ENCODE measurements at regions of chr9 and their contacts with region 1.

Region 1: DNA sequence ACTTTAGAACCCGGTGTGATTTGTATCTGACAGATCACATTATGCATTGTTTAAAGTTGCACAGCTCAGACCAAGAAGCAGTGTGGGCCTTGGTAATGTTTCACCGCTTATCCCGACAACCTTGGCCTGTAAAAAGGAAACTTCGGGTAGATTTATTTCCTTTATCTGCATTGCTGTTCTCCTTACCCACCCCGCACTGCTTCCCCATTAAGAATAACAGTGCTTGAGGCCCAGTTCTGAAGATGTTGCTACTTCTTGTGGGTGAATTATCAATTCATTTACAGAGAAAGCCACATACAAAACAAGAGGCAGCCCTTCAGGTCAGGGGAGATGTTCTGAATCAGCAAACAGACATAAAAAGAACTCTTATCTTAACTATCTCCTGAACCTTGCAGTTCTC is 8.4 kb downstream of the SMARCA2 start:
- DNase-seq: no peak
- ATAC-seq: no peak

Region 2: GRCh38 chr9:2087500-2088313 is 64.2 kb after region 1 on chr9:
- intact Hi-C with region 1: loop called in 1 of 2 experiments (anchors 10 kb)
- DNase-seq: no peak
- ATAC-seq: peak; percentile 54

Measured in left colon (tissue), 2 donors.